KBM-7 (cell line): ENCODE measurements at regions of chr2 and their contacts with region 1.

Region 1: GRCh38 chr2:237744613-237745249 is 53.8 kb upstream of the RBM44 start:
- DNase-seq: peak; percentile 75

Region 2: DNA sequence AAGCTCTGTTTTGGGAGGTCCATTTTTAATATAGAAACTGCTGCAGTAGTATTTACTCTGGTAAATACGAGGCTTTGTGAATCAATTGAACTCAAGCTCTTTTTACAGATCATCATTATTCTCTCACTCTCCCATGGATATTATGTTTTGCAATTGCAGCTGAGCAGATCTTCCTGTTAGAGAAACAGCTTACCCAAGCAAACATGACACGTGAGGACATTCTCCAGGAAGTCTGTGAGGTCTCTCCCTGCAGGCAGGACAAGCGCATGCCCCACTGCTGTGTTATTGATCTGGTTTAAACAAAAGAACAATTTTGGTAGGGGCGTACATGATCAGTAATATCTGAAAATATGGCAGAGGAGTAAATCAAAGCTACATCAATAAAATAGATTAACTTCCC is 402.9 kb before region 1 on chr2:
- in situ Hi-C with region 1: no loop called
- DNase-seq: no peak

Region 3: GRCh38 chr2:237590272-237591140 is 154.2 kb before region 1 on chr2 and contains the start of gene RAB17:
- in situ Hi-C with region 1: loop called (anchors 10 kb)
- DNase-seq: no peak